Right lobe of liver (tissue), 6 donors: ENCODE measurements at regions of chr9 and their contacts with region 1.

Region 1: GRCh38 chr9:137236238-137236935 is 4.7 kb upstream of the TUBB4B start:
- DNase-seq: peak; percentile 87 to 88 (median 88)
- ATAC-seq: peak; percentile 61 to 65 (median 64)
- H3K4me3 ChIP-seq: no peak overlapping the region
- H3K27ac ChIP-seq: no peak overlapping the region
- H3K4me1 ChIP-seq: peaks cover 0 to 8% (median 0%) of the 10 kb centered on the region in 4 donors
- H3K27me3 ChIP-seq: no peaks in the 10 kb centered on the region
- CTCF ChIP-seq: peak; percentile 91 to 99 (median 97)
- POLR2A ChIP-seq: no peak

Region 2: GRCh38 chr9:137114610-137115391 is 121.6 kb before region 1 on chr9 and contains the start of gene DPP7:
- intact Hi-C with region 1: loop called in 1 of 2 experiments (anchors 5 kb)
- DNase-seq: peak; percentile 83 to 85 (median 85)
- ATAC-seq: peak; percentile 88 to 97 (median 90)
- H3K4me3 ChIP-seq: peak within 1 kb of the TSS; percentile 68 to 79 (median 70)
- H3K27ac ChIP-seq: no peak within 1 kb of the TSS
- H3K4me1 ChIP-seq: peaks cover 0 to 4% (median 1%) of the 10 kb centered on the region in 4 donors
- H3K27me3 ChIP-seq: no peaks in the 10 kb centered on the region
- CTCF ChIP-seq: no peak
- POLR2A ChIP-seq: peak; percentile 57
- total RNA-seq, gene DPP7: 62.2 to 86.2 (median 66.2) TPM

Region 3: DNA sequence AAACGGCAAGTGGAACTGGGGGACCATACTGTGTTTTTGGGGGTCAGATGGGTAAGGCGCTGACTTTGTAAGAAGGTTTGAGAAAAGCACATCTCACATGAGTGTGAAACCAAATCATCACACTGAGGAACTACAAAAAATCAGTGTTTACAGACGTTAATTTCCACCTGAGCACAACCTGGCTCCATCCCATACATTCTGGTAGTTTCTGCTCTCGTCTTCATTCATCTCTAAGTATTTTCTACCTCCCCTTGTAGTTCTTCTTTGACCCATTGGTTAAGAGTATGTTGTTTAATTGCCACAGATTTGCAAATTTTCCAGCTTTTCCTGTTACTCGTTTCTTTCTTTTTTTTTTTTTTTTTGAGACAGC is 112.9 kb before region 1 on chr9:
- intact Hi-C with region 1: loop called (anchors 5 kb)
- DNase-seq: no peak
- ATAC-seq: no peak
- H3K4me3 ChIP-seq: no peak overlapping the region
- H3K27ac ChIP-seq: no peak overlapping the region
- H3K4me1 ChIP-seq: peaks cover 0 to 9% (median under 1%) of the 10 kb centered on the region in 4 donors
- H3K27me3 ChIP-seq: no peaks in the 10 kb centered on the region
- CTCF ChIP-seq: no peak
- POLR2A ChIP-seq: no peak

Region 4: DNA sequence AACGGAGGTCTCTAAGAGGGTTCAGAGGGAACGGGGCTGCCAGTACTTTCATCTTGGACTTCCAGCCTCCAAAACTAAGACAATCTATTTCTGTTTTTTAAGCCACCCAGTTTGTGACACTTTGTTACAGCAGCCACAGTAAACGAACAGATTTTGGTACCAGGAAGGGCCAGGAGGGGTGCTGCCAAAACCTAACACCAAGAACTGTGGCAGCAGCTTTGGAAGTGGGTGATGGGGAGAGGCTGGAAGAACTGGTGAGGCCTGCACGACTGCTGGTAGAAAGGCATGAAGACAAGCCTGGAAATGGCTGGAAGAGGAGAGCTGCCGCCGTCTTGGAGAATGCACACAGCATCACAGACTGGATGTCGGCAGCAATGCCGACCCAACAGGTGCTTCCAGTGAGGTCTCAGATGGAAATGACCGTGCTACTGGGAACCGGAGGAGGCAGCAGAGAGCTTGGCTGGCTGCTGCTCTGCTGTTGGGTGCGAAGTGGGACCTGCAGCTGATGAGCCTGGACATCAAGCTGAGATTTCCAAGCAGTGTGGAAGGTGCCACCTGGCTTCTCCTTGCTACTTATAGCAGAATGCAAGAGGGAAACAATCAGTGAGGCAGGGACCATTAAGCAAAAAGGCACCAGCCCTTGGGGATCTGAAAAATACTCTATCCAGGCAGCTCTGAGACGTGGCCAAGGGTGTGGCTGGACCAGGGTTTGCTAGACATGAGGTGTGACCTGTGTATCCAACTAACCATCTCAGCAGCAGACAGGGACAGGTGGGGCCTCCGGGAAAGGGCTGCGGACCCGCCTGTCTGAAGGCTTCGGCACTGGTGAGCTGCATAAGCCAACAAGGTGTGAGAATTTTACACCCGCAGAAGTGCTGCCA is 59.8 kb before region 1 on chr9:
- intact Hi-C with region 1: loop called (anchors 5 to 10 kb)
- DNase-seq: no peak
- ATAC-seq: peak; percentile 55 to 79 (median 73)
- H3K4me3 ChIP-seq: no peak overlapping the region
- H3K27ac ChIP-seq: no peak overlapping the region
- H3K4me1 ChIP-seq: no peaks in the 10 kb centered on the region
- H3K27me3 ChIP-seq: no peaks in the 10 kb centered on the region
- CTCF ChIP-seq: peak; percentile 45 to 58 (median 52)
- POLR2A ChIP-seq: no peak

Region 5: GRCh38 chr9:137188490-137189296 is 47.7 kb before region 1 on chr9 and contains the starts of genes ANAPC2 and SSNA1:
- intact Hi-C with region 1: loop called in 1 of 2 experiments (anchors 10 kb)
- DNase-seq: peak; percentile 91 to 94 (median 93)
- ATAC-seq: peak; percentile 79 to 90 (median 83)
- H3K4me3 ChIP-seq: peak within 1 kb of the TSS; percentile 90 to 100 (median 98)
- H3K27ac ChIP-seq: peak within 1 kb of the TSS; percentile 85 to 92 (median 91)
- H3K4me1 ChIP-seq: peaks cover 0 to 34% (median 15%) of the 10 kb centered on the region in 4 donors
- H3K27me3 ChIP-seq: no peaks in the 10 kb centered on the region
- CTCF ChIP-seq: peak; percentile 3 to 43 (median 18)
- POLR2A ChIP-seq: peak; percentile 88
- total RNA-seq, gene ANAPC2: 16.1 to 36.5 (median 27.9) TPM
- total RNA-seq, gene SSNA1: 21.5 to 53.3 (median 25.5) TPM